WTC11 (cell line): ENCODE measurements at regions of chr9 and their contacts with region 1.

Region 1: DNA sequence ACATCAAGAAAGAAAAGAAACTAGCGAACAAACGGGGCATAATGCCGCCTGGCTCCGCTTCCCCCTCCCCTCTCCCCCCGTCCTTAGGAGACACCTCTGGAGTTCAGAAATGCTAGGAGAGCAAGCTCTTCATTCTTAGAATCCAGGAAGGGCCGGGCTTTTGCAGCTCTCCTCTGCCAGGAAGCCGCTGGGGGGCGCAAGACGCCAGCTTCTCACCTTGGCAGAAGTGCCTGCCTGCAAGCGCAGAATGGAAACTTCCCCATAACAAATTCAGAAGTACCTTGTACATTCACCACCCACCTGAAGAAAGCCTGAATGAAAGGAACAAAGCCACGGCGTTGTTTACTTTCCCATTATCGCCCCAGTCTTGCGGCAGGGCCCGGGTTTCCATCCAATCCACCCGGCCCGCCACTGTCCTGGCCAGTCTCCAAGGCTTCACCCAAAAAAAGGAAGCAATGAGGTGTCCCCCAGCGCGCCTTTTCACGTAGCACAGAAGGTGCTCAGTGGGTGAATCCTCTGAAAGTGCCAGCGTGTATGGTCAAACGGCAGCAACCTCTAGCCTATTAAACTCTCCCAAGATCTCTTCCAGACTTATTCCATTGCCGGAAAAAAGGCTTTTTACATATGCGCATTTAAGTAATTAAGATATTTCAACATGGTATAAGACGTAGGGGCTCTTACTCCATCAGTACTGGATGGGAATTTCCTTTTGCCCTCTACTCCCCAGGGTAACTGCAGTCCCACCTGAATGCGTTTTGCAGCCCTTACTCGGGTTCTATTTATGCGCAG is 1.6 kb upstream of the GADD45G start:
- DNase-seq: peak; percentile 96
- ATAC-seq: peak; percentile 18
- H3K4me3 Mint-ChIP-seq: peak overlapping the region; percentile 77
- H3K27ac Mint-ChIP-seq: peak overlapping the region; percentile 83
- H3K4me1 Mint-ChIP-seq: peaks cover 20% of the 10 kb centered on the region
- H3K27me3 Mint-ChIP-seq: peaks cover 28% of the 10 kb centered on the region
- CTCF ChIP-seq: peak; percentile 66

Region 2: GRCh38 chr9:89284076-89284475 is 319.1 kb before region 1 on chr9:
- CTCF ChIA-PET with region 1: no interaction called
- POLR2A ChIA-PET with region 1: no interaction called
- DNase-seq: no peak
- ATAC-seq: no peak
- H3K4me3 Mint-ChIP-seq: no peak overlapping the region
- H3K27ac Mint-ChIP-seq: no peak overlapping the region
- H3K4me1 Mint-ChIP-seq: 0 out of 2 replicates have a peak, but pooled peaks cover 4% of the 10 kb centered on the region
- H3K27me3 Mint-ChIP-seq: no peaks in the 10 kb centered on the region
- CTCF ChIP-seq: no peak

Region 3: DNA sequence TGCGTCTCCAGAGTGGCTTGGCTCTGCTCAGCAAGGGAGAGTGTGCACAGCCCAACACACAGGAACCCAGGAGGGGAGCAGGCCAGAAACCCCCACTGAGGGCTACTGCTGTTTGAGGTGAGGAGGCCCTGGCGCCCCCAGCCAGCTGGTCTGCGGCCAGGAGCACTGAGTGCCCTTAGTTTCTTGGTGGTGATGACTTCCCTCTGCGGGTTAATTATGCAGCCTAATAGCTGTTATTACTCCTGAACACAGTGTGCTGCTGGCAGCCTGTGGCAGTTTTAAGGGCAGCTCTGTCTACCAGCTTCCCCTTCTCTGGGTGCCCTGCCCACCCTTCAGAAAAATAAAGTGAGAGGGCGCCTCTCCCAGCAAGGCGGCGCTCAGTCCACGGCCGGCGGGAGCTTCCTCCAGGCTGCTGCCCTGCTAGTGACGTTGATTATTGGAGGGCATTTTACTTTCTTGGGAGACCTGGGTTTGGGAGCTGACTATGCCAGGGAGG is 20.8 kb after region 1 on chr9:
- CTCF ChIA-PET with region 1: interaction called, 46 read pairs
- POLR2A ChIA-PET with region 1: interaction called, 11 read pairs
- DNase-seq: no peak
- ATAC-seq: no peak
- H3K4me3 Mint-ChIP-seq: no peak overlapping the region
- H3K27ac Mint-ChIP-seq: no peak overlapping the region
- H3K4me1 Mint-ChIP-seq: peaks cover 26% of the 10 kb centered on the region
- H3K27me3 Mint-ChIP-seq: no peaks in the 10 kb centered on the region; the same call in 1 of the 2 replicates
- CTCF ChIP-seq: no peak

Region 4: GRCh38 chr9:89686095-89686494 is 82.9 kb after region 1 on chr9:
- CTCF ChIA-PET with region 1: interaction called, 12 read pairs
- POLR2A ChIA-PET with region 1: interaction called, 3 read pairs
- DNase-seq: no peak
- ATAC-seq: no peak
- H3K4me3 Mint-ChIP-seq: no peak overlapping the region
- H3K27ac Mint-ChIP-seq: peak overlapping the region; percentile 61; the same call in 1 of the 2 replicates
- H3K4me1 Mint-ChIP-seq: peaks cover 30% of the 10 kb centered on the region
- H3K27me3 Mint-ChIP-seq: peaks cover 11% of the 10 kb centered on the region; the same call in 1 of the 2 replicates
- CTCF ChIP-seq: no peak

Region 5: DNA sequence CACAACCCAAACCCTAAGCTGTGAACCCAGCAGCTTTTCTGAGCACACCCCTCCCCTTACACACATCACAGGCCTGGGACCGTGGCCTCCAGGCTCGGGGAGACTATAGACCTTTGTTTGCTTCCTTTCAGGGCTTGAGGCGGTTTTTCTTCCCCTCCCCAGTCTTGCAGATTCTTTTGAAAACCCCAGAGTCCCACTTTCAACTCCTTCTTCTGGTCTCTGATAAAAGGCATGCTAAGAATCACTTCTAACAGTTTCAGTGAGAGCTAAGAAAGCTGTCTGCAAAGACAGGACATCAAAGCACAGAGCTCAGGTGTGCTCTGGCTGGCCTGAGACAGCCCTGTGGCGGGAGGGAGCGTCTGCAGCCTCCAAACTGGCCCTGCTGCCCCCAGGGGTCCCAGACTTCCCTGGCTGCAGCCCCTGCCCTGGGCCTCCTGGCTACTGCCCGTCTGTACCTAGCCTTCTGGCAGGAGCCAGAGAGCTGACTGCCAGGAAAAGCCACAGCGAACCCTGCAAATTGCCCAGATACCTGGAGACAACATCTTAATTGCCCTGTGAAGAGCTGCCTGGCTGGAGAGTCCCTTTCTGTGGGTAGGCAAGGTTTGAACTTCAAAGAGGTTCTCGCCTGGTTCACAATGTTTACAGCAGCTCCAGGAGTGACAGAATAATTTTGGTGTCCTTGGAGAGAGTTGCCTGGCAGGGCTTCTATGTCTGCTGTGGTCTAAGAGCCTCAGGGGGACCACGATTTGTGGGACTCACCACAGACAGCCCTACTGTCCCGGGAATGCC is 140.6 kb after region 1 on chr9:
- CTCF ChIA-PET with region 1: interaction called, 28 read pairs
- POLR2A ChIA-PET with region 1: interaction called, 5 read pairs
- DNase-seq: peak; percentile 63
- ATAC-seq: peak; percentile 95
- H3K4me3 Mint-ChIP-seq: no peak overlapping the region
- H3K27ac Mint-ChIP-seq: peak overlapping the region; percentile 66
- H3K4me1 Mint-ChIP-seq: peaks cover 12% of the 10 kb centered on the region
- H3K27me3 Mint-ChIP-seq: no peaks in the 10 kb centered on the region
- CTCF ChIP-seq: no peak

Region 6: DNA sequence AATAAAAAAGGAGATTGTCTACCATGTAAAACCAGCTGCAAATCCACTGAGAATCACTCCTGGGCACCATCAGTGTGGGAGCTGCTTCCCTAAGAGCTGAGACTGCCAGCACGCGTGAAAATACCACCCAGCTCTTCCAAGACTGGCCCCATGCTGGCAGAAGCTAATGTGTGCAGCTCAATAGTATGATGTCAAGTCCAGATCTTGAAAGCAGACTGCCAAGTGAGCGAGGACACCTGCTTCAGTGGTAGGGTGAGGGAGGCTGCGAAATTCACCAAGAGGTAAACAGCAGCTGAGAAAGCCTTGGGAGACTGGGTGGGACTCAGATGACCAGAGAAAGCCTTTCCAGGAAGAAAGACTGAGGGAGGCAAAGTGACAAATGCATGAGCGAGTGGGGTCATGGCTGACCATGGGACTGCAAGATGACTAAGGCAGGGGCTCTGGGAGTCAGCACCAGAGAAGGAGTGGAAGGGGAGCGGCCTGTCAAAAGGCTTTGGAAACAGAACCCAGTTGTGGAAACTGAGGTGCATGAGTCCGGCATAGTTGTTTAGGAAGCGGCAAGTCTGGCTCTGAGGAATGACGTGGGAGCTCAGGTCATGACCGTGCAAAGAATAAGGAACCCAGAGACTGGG is 202.6 kb after region 1 on chr9:
- CTCF ChIA-PET with region 1: interaction called, 13 read pairs
- POLR2A ChIA-PET with region 1: no interaction called
- DNase-seq: no peak
- ATAC-seq: no peak
- H3K4me3 Mint-ChIP-seq: no peak overlapping the region
- H3K27ac Mint-ChIP-seq: no peak overlapping the region
- H3K4me1 Mint-ChIP-seq: peaks cover 53% of the 10 kb centered on the region
- H3K27me3 Mint-ChIP-seq: no peaks in the 10 kb centered on the region; the same call in 1 of the 2 replicates
- CTCF ChIP-seq: no peak

Region 7: GRCh38 chr9:89929673-89930480 is 326.7 kb after region 1 on chr9:
- CTCF ChIA-PET with region 1: interaction called, 46 read pairs
- POLR2A ChIA-PET with region 1: no interaction called
- DNase-seq: no peak
- ATAC-seq: no peak
- H3K4me3 Mint-ChIP-seq: no peak overlapping the region
- H3K27ac Mint-ChIP-seq: no peak overlapping the region
- H3K4me1 Mint-ChIP-seq: peaks cover 6% of the 10 kb centered on the region
- H3K27me3 Mint-ChIP-seq: peaks cover 2% of the 10 kb centered on the region; the same call in 1 of the 2 replicates
- CTCF ChIP-seq: no peak

Region 8: GRCh38 chr9:90102292-90102901 is 499.2 kb after region 1 on chr9:
- CTCF ChIA-PET with region 1: interaction called, 157 read pairs
- POLR2A ChIA-PET with region 1: interaction called, 3 read pairs
- DNase-seq: peak; percentile 80
- ATAC-seq: peak; percentile 99
- H3K4me3 Mint-ChIP-seq: no peak overlapping the region
- H3K27ac Mint-ChIP-seq: no peak overlapping the region
- H3K4me1 Mint-ChIP-seq: peaks cover 3% of the 10 kb centered on the region; the same call in 1 of the 2 replicates
- H3K27me3 Mint-ChIP-seq: no peaks in the 10 kb centered on the region
- CTCF ChIP-seq: peak; percentile 74; the same call in 1 of the 2 replicates